Mammary epithelial cell (primary cell): ENCODE measurements at regions of chr22 and their contacts with region 1.

Region 1: GRCh38 chr22:40512426-40513136 is 123.9 kb downstream of the MRTFA start:
- DNase-seq: peak; percentile 94
- H3K4me3 ChIP-seq: no peak overlapping the region
- H3K27ac ChIP-seq: peak overlapping the region; percentile 77
- H3K4me1 ChIP-seq: peaks cover 54% of the 10 kb centered on the region
- H3K27me3 ChIP-seq: no peaks in the 10 kb centered on the region
- CTCF ChIP-seq: no peak

Region 2: GRCh38 chr22:40487663-40488249 is 24.8 kb before region 1 on chr22:
- CTCF ChIA-PET with region 1: interaction called, 7 read pairs
- dilution Hi-C with region 1: no loop called
- in situ Hi-C with region 1: no loop called
- intact Hi-C with region 1: loop called (anchors 1 kb)
- DNase-seq: no peak
- H3K4me3 ChIP-seq: no peak overlapping the region
- H3K27ac ChIP-seq: peak overlapping the region; percentile 83
- H3K4me1 ChIP-seq: peaks cover 43% of the 10 kb centered on the region
- H3K27me3 ChIP-seq: no peaks in the 10 kb centered on the region
- CTCF ChIP-seq: peak; percentile 81 to 86

Region 3: DNA sequence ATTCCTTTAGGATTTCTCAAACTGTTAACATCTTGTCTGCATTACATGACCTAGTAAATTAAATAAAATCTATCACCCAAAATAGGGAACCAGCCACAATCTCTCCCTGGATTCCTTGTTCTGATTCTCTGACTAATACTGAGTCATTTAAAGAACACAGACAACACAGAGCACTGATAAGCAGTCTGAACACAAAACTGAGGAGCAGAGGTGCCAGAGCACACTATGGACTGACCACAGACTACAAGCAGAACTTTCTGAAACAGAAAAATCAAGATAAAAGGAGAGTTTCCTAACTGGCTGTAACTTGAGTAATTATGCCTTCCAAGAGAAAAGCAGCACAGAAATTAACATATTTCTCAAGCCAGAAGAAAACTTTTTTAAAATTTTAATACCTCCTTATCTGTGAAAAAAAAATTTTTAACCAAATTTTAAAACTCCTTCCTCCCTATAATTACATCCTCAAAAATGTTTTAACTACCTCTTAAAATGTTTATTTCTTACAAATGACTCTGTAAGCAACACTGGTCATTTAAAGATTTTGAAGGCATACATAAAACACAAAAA is 13.3 kb before region 1 on chr22:
- CTCF ChIA-PET with region 1: no interaction called
- dilution Hi-C with region 1: no loop called
- in situ Hi-C with region 1: no loop called
- intact Hi-C with region 1: loop called (anchors 2 kb)
- DNase-seq: peak; percentile 87
- H3K4me3 ChIP-seq: peak overlapping the region in 2 of 3 experiments; percentile 18 to 22
- H3K27ac ChIP-seq: peak overlapping the region; percentile 93
- H3K4me1 ChIP-seq: peaks cover 27% of the 10 kb centered on the region
- H3K27me3 ChIP-seq: no peaks in the 10 kb centered on the region
- CTCF ChIP-seq: no peak